ENCODE measurements at regions of chr4 and their contacts with region 1.

Region 1: GRCh38 chr4:153115322-153116290 is 88.6 kb upstream of the TRIM2 start:
- DNase-seq: peak; percentile 89
- H3K4me3 Mint-ChIP-seq: no peak overlapping the region
- H3K27ac Mint-ChIP-seq: no peak overlapping the region
- H3K4me1 Mint-ChIP-seq: peaks cover 17% of the 10 kb centered on the region
- H3K27me3 Mint-ChIP-seq: no peaks in the 10 kb centered on the region

Region 2: DNA sequence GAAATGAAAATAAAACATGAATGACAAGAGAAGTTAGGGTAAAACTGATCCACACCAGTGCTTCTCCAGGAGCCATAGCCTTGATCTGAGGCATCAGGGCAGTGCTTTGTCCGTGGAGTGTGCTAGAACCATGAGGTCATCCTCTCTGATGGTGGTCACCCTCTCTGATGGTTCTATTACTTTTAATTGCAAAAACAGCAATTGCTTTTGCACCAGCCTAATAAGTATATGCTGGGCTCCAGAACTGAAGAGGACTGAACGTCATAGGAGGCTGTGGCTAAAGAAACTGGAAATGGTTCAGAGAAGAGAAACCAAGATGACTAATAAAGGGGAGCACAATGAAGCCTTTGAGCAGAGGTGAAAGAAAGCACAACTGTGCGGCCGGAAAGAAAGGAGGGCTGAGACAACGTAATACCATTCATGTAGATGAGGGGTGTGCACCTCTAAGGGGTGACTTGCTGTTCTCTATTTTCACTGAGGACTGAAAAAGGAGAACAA is 418.8 kb before region 1 on chr4:
- CTCF ChIA-PET with region 1: no interaction called
- POLR2A ChIA-PET with region 1: no interaction called
- intact Hi-C with region 1: loop called (anchors 5 kb)
- DNase-seq: peak; percentile 84
- H3K4me3 Mint-ChIP-seq: no peak overlapping the region
- H3K27ac Mint-ChIP-seq: peak overlapping the region; percentile 51
- H3K4me1 Mint-ChIP-seq: peaks cover 19% of the 10 kb centered on the region
- H3K27me3 Mint-ChIP-seq: peaks cover 3% of the 10 kb centered on the region

Region 3: GRCh38 chr4:152779513-152780266 is 335.9 kb before region 1 on chr4 and contains the starts of genes ARFIP1 and TIGD4:
- CTCF ChIA-PET with region 1: no interaction called
- POLR2A ChIA-PET with region 1: no interaction called
- intact Hi-C with region 1: loop called (anchors 1 kb)
- DNase-seq: peak; percentile 98
- H3K4me3 Mint-ChIP-seq: peak within 1 kb of the TSS; percentile 95
- H3K27ac Mint-ChIP-seq: peak within 1 kb of the TSS; percentile 85
- H3K4me1 Mint-ChIP-seq: peaks cover 34% of the 10 kb centered on the region
- H3K27me3 Mint-ChIP-seq: peaks cover 3% of the 10 kb centered on the region
- total RNA-seq, gene ARFIP1: 9.3 to 10.5 TPM
- total RNA-seq, gene TIGD4: 0.15 to 0.31 TPM

Region 4: DNA sequence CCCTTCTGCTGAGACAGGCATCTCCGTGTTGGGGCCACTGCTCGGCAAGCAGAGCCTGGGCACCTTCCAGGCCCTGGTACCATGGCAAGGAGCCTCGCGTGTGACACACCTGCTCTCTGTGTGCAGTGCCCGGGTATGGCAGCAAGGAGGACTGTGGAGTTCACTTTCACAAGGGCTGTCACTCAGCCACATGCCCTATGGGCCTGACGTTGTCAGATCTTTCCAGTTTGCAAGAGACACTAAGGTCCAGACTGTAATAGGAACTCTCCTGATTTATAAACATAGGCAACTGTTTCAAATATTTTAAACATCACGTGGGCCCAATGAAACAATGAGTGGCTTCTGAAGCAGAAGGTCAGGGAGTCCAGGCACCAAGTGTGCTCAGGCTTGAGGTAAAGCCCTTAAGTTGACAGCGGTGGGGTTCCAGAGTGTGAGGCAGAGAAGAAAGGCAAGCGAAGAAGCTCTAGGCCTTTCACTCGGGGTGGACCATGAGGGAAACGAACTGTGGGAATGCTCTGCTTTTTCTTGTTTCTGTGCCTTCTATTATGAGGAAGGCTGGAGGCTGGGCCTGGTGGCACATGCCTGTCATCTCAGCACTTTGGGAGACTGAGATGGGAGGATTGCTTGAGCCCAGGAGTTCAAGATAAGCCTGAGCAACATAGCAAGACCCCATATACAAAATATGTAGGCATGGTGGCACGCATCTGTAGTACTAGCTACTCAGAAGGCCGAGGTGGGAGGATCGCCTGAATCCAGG is 20.0 kb before region 1 on chr4:
- CTCF ChIA-PET with region 1: interaction called, 3 read pairs
- POLR2A ChIA-PET with region 1: no interaction called
- intact Hi-C with region 1: loop called (anchors 2 kb)
- DNase-seq: no peak
- H3K4me3 Mint-ChIP-seq: no peak overlapping the region
- H3K27ac Mint-ChIP-seq: no peak overlapping the region
- H3K4me1 Mint-ChIP-seq: peaks cover 4% of the 10 kb centered on the region
- H3K27me3 Mint-ChIP-seq: no peaks in the 10 kb centered on the region

Region 5: GRCh38 chr4:153137159-153137558 is 21.6 kb after region 1 on chr4:
- CTCF ChIA-PET with region 1: no interaction called
- POLR2A ChIA-PET with region 1: no interaction called
- intact Hi-C with region 1: loop called (anchors 2 kb)
- DNase-seq: no peak
- H3K4me3 Mint-ChIP-seq: no peak overlapping the region
- H3K27ac Mint-ChIP-seq: no peak overlapping the region
- H3K4me1 Mint-ChIP-seq: peaks cover 16% of the 10 kb centered on the region
- H3K27me3 Mint-ChIP-seq: peaks cover 2% of the 10 kb centered on the region

Region 6: GRCh38 chr4:153153339-153153871 is 37.8 kb after region 1 on chr4:
- CTCF ChIA-PET with region 1: no interaction called
- POLR2A ChIA-PET with region 1: interaction called, 4 read pairs
- intact Hi-C with region 1: loop called (anchors 2 kb)
- DNase-seq: peak; percentile 89
- H3K4me3 Mint-ChIP-seq: peak overlapping the region; percentile 78
- H3K27ac Mint-ChIP-seq: peak overlapping the region; percentile 83
- H3K4me1 Mint-ChIP-seq: peaks cover 53% of the 10 kb centered on the region
- H3K27me3 Mint-ChIP-seq: peaks cover 2% of the 10 kb centered on the region

Region 7: DNA sequence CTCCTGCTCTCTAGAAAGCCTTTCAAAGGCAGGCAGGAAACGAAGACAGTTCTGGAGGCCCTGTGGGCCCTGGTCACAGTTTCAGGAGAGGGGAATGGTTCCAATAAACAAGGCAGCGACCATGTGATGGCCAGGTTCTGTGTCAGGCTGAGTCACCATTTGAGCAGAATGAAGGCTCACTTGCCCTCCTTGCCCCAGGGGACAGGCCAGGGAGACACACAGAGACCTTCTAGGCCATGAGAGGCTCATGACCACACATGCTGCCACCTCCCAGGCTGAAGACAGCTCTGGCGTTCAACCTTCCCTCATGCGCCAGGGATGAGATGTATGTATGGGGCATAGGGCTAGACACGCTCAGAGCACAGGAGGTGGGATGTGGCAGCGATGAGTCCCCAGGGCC is 65.7 kb after region 1 on chr4:
- CTCF ChIA-PET with region 1: no interaction called
- POLR2A ChIA-PET with region 1: no interaction called
- intact Hi-C with region 1: no loop called
- DNase-seq: no peak
- H3K4me3 Mint-ChIP-seq: no peak overlapping the region
- H3K27ac Mint-ChIP-seq: no peak overlapping the region
- H3K4me1 Mint-ChIP-seq: peaks cover 2% of the 10 kb centered on the region
- H3K27me3 Mint-ChIP-seq: no peaks in the 10 kb centered on the region

Region 8: GRCh38 chr4:153506341-153507309 is 391.0 kb after region 1 on chr4:
- CTCF ChIA-PET with region 1: no interaction called
- POLR2A ChIA-PET with region 1: no interaction called
- intact Hi-C with region 1: no loop called
- DNase-seq: no peak
- H3K4me3 Mint-ChIP-seq: no peak overlapping the region
- H3K27ac Mint-ChIP-seq: no peak overlapping the region
- H3K4me1 Mint-ChIP-seq: peaks cover 65% of the 10 kb centered on the region
- H3K27me3 Mint-ChIP-seq: no peaks in the 10 kb centered on the region

Region 9: DNA sequence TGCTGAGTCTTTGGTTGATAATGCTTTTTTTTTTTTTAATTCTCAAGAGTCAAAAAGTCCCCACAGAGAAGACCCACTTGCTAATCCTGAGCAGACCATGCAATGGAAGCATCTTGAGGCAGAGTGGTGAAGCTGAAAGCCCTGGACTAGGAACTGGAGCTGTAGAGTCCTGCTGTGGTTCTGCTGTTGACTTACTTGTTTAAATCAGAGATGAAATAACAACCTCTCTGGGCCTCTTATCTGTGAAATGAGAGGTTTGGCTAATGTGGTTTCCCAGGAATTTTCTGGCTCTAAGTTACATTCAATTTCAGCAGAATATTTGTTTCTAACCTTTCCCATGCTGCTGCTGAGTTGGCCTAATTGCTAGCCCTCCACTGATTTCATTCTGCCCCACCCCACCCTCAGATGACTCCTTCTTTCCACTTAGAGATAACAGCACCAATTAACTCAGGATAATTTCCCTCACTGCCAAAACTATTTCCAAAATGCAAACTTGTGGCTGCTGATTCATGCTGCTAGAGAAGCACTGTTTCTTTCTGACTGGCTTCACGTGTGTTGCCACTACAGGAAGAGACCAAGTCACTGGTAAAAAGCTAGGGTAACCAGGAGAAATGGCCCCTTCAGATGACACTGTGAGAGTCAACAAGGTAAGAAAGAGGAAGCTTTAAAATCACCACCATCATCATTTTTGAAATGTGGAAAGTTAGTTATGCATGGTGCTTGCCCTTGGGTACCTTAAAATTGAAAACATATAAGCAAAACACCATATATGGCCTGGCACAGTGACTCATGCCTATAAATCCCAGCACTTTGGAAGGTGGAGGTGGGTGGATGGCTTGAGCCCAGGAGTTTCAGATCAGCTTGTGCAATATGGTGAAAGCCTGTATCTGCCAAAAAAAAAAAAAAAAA is 1049.6 kb after region 1 on chr4:
- CTCF ChIA-PET with region 1: no interaction called
- POLR2A ChIA-PET with region 1: no interaction called
- intact Hi-C with region 1: loop called (anchors 2 kb)
- DNase-seq: peak; percentile 49
- H3K4me3 Mint-ChIP-seq: no peak overlapping the region
- H3K27ac Mint-ChIP-seq: peak overlapping the region; percentile 11
- H3K4me1 Mint-ChIP-seq: peaks cover 16% of the 10 kb centered on the region
- H3K27me3 Mint-ChIP-seq: peaks cover 9% of the 10 kb centered on the region